ENCODE measurements at regions of chr2 and their contacts with region 1.

Region 1: GRCh38 chr2:28392297-28393113 is at the start of gene FOSL2:
- DNase-seq: peak; percentile 83 to 99 (median 92)
- ATAC-seq: peak; percentile 69
- H3K4me3 ChIP-seq: peak within 1 kb of the TSS; percentile 69 to 78
- H3K4me3 Mint-ChIP-seq: peak within 1 kb of the TSS; percentile 86
- H3K27ac ChIP-seq: peak within 1 kb of the TSS; percentile 85 to 95
- H3K27ac Mint-ChIP-seq: peak within 1 kb of the TSS; percentile 97
- H3K4me1 ChIP-seq: peaks cover 36% of the 10 kb centered on the region
- H3K4me1 Mint-ChIP-seq: peaks cover 25% of the 10 kb centered on the region
- H3K27me3 ChIP-seq: no peaks in the 10 kb centered on the region
- H3K27me3 Mint-ChIP-seq: no peaks in the 10 kb centered on the region
- CTCF ChIP-seq: no peak
- total RNA-seq, gene FOSL2: 359 to 360 TPM

Region 2: GRCh38 chr2:27960237-27960912 is 432.1 kb before region 1 on chr2:
- CTCF ChIA-PET with region 1: no interaction called
- POLR2A ChIA-PET with region 1: no interaction called
- intact Hi-C with region 1: loop called in 1 of 2 experiments (anchors 10 kb)
- DNase-seq: peak in 3 of 9 experiments; percentile 22 to 59 (median 31)
- ATAC-seq: peak; percentile 85
- H3K4me3 ChIP-seq: no peak overlapping the region
- H3K4me3 Mint-ChIP-seq: peak overlapping the region; percentile 37
- H3K27ac ChIP-seq: no peak overlapping the region
- H3K27ac Mint-ChIP-seq: peak overlapping the region; percentile 33
- H3K4me1 ChIP-seq: peaks cover 27% of the 10 kb centered on the region
- H3K4me1 Mint-ChIP-seq: peaks cover 57% of the 10 kb centered on the region
- H3K27me3 ChIP-seq: no peaks in the 10 kb centered on the region
- H3K27me3 Mint-ChIP-seq: no peaks in the 10 kb centered on the region
- CTCF ChIP-seq: no peak

Region 3: DNA sequence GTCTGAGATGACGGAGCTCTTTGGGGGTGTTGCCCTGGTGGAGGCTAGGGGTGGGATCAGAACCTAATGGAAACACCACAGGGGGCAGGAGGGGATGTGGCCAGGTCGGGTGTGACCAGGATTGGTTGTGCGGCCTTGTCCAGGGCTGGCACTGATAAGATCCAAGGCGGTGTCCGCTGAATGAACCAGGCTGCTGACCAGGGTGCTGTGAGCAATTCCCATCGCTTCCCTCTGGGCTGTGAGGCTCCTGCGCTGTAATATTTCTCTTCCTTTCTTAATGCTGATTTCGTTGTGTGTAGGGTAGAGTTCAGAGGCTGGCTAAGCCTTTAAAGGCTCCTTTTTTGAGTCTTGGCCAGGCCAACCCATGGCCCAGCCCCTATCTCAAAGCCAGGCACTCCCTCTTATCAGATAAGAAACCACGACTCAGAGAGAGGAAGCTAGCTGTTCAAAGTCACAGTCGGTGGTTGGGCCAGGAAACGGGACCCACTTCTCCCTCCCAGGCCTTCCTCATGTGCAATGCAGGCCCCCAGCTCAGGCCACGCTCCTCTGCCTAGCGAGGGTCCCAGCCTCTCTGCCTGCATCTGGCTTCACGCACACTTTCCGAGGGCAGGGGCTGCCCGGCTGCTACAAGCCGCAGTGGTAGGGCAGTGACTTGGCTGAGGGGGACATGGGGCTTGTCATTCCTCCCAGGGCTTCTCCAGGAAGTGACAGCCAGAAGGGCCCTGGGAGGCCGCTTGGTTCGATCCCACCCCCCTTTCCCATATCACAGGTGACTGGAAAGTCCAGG is 25.8 kb before region 1 on chr2:
- CTCF ChIA-PET with region 1: interaction called, 3 read pairs
- POLR2A ChIA-PET with region 1: interaction called, 9 read pairs
- intact Hi-C with region 1: loop called in 1 of 2 experiments (anchors 1 kb)
- DNase-seq: peak; percentile 37 to 88 (median 66)
- ATAC-seq: peak; percentile 89
- H3K4me3 ChIP-seq: peak overlapping the region; percentile 3 to 30
- H3K4me3 Mint-ChIP-seq: peak overlapping the region; percentile 66
- H3K27ac ChIP-seq: peak overlapping the region; percentile 21 to 63
- H3K27ac Mint-ChIP-seq: peak overlapping the region; percentile 74
- H3K4me1 ChIP-seq: peaks cover 45% of the 10 kb centered on the region
- H3K4me1 Mint-ChIP-seq: peaks cover 45% of the 10 kb centered on the region
- H3K27me3 ChIP-seq: no peaks in the 10 kb centered on the region
- H3K27me3 Mint-ChIP-seq: peaks cover 4% of the 10 kb centered on the region
- CTCF ChIP-seq: no peak

Region 4: DNA sequence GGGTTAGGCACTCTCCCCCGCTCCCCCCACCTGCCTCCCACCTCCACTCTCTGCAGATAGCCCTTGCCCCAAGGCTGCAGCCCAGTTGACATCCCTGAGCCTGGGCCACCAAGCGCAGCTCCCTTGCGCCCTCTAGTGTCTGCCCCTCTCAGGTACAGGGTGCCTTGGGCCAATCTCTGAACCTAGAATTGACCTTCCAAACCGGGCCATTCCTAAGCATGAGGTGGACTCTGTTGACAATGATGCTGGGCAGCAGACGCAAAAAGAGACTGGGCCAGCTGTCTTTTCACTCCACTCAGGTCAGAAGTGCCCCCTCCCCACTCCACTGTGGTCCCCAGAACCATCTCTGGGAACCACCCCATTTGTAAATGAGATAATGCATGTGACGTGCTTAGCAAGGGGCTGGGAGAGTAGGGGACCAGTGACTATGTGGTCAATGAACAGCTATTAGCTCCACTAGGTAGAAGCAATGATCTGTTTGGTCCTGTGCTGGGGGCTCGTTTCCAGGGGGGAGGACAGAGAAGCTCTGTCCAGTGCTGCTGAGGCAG is 60.1 kb after region 1 on chr2:
- CTCF ChIA-PET with region 1: interaction called, 7 read pairs
- POLR2A ChIA-PET with region 1: interaction called, 11 read pairs
- intact Hi-C with region 1: loop called (anchors 1 kb)
- DNase-seq: peak; percentile 60 to 89 (median 80)
- ATAC-seq: peak; percentile 91
- H3K4me3 ChIP-seq: no peak overlapping the region
- H3K4me3 Mint-ChIP-seq: no peak overlapping the region
- H3K27ac ChIP-seq: no peak overlapping the region
- H3K27ac Mint-ChIP-seq: no peak overlapping the region
- H3K4me1 ChIP-seq: no peaks in the 10 kb centered on the region
- H3K4me1 Mint-ChIP-seq: peaks cover 2% of the 10 kb centered on the region
- H3K27me3 ChIP-seq: no peaks in the 10 kb centered on the region
- H3K27me3 Mint-ChIP-seq: no peaks in the 10 kb centered on the region
- CTCF ChIP-seq: peak; percentile 80

Region 5: GRCh38 chr2:28776471-28776870 is 384.0 kb after region 1 on chr2:
- CTCF ChIA-PET with region 1: no interaction called
- POLR2A ChIA-PET with region 1: no interaction called
- intact Hi-C with region 1: no loop called
- DNase-seq: no peak
- ATAC-seq: no peak
- H3K4me3 ChIP-seq: no peak overlapping the region
- H3K4me3 Mint-ChIP-seq: no peak overlapping the region
- H3K27ac ChIP-seq: no peak overlapping the region
- H3K27ac Mint-ChIP-seq: no peak overlapping the region
- H3K4me1 ChIP-seq: peaks cover 10% of the 10 kb centered on the region
- H3K4me1 Mint-ChIP-seq: peaks cover 53% of the 10 kb centered on the region
- H3K27me3 ChIP-seq: no peaks in the 10 kb centered on the region
- H3K27me3 Mint-ChIP-seq: no peaks in the 10 kb centered on the region
- CTCF ChIP-seq: no peak

Region 6: GRCh38 chr2:28870146-28870891 is 477.8 kb after region 1 on chr2 and contains the start of gene TRMT61B:
- CTCF ChIA-PET with region 1: no interaction called
- POLR2A ChIA-PET with region 1: no interaction called
- intact Hi-C with region 1: loop called in 1 of 2 experiments (anchors 5 kb)
- DNase-seq: peak; percentile 89 to 99 (median 97)
- ATAC-seq: peak; percentile 96
- H3K4me3 ChIP-seq: peak within 1 kb of the TSS; percentile 89 to 98
- H3K4me3 Mint-ChIP-seq: peak within 1 kb of the TSS; percentile 94
- H3K27ac ChIP-seq: peak within 1 kb of the TSS; percentile 94 to 95
- H3K27ac Mint-ChIP-seq: peak within 1 kb of the TSS; percentile 99
- H3K4me1 ChIP-seq: peaks cover 28% of the 10 kb centered on the region
- H3K4me1 Mint-ChIP-seq: peaks cover 33% of the 10 kb centered on the region
- H3K27me3 ChIP-seq: no peaks in the 10 kb centered on the region
- H3K27me3 Mint-ChIP-seq: no peaks in the 10 kb centered on the region
- CTCF ChIP-seq: no peak
- total RNA-seq, gene TRMT61B: 17.9 to 22.9 TPM

Measured in CD8-positive, alpha-beta T cell (primary cell).